GM12878 (cell line): ENCODE measurements at regions of chr17 and their contacts with region 1.

Region 1: GRCh38 chr17:50853015-50853615 is 13.0 kb downstream of the TOB1 start:
- DNase-seq: no peak
- ATAC-seq: no peak
- H3K4me3 ChIP-seq: no peak overlapping the region
- H3K27ac ChIP-seq: no peak overlapping the region
- H3K4me1 ChIP-seq: peaks cover 3% of the 10 kb centered on the region; the same call in 1 of the 2 replicates
- H3K27me3 ChIP-seq: no peaks in the 10 kb centered on the region; a peak in 1 of 4 replicates
- CTCF ChIP-seq: no peak
- EP300 ChIP-seq: no peak
- POLR2A ChIP-seq: no peak
- RAD21 ChIP-seq: no peak

Region 2: GRCh38 chr17:50798424-50799288 is 54.5 kb before region 1 on chr17:
- CTCF ChIA-PET with region 1: no interaction called
- POLR2A ChIA-PET with region 1: no interaction called
- RAD21 ChIA-PET with region 1: no interaction called
- SMC1A ChIA-PET with region 1: no interaction called
- in situ Hi-C with region 1: no loop called
- intact Hi-C with region 1: no loop called
- DNase-seq: no peak
- ATAC-seq: no peak
- H3K4me3 ChIP-seq: no peak overlapping the region
- H3K27ac ChIP-seq: no peak overlapping the region
- H3K4me1 ChIP-seq: no peaks in the 10 kb centered on the region
- H3K27me3 ChIP-seq: no peaks in the 10 kb centered on the region; a peak in 1 of 4 replicates
- CTCF ChIP-seq: no peak
- EP300 ChIP-seq: no peak
- POLR2A ChIP-seq: no peak
- RAD21 ChIP-seq: no peak

Region 3: GRCh38 chr17:50841949-50842354 is 11.2 kb before region 1 on chr17:
- CTCF ChIA-PET with region 1: interaction called, 22 read pairs
- POLR2A ChIA-PET with region 1: no interaction called
- RAD21 ChIA-PET with region 1: interaction called, 6 read pairs
- SMC1A ChIA-PET with region 1: interaction called, 10 read pairs
- in situ Hi-C with region 1: no loop called
- intact Hi-C with region 1: no loop called
- DNase-seq: no peak
- ATAC-seq: peak; percentile 90
- H3K4me3 ChIP-seq: no peak overlapping the region
- H3K27ac ChIP-seq: no peak overlapping the region
- H3K4me1 ChIP-seq: no peaks in the 10 kb centered on the region
- H3K27me3 ChIP-seq: no peaks in the 10 kb centered on the region; a peak in 2 of 4 replicates
- CTCF ChIP-seq: peak; percentile 74 to 88 (median 83); a peak in 5 of 6 replicates
- EP300 ChIP-seq: no peak
- POLR2A ChIP-seq: no peak
- RAD21 ChIP-seq: peak; percentile 85

Region 4: DNA sequence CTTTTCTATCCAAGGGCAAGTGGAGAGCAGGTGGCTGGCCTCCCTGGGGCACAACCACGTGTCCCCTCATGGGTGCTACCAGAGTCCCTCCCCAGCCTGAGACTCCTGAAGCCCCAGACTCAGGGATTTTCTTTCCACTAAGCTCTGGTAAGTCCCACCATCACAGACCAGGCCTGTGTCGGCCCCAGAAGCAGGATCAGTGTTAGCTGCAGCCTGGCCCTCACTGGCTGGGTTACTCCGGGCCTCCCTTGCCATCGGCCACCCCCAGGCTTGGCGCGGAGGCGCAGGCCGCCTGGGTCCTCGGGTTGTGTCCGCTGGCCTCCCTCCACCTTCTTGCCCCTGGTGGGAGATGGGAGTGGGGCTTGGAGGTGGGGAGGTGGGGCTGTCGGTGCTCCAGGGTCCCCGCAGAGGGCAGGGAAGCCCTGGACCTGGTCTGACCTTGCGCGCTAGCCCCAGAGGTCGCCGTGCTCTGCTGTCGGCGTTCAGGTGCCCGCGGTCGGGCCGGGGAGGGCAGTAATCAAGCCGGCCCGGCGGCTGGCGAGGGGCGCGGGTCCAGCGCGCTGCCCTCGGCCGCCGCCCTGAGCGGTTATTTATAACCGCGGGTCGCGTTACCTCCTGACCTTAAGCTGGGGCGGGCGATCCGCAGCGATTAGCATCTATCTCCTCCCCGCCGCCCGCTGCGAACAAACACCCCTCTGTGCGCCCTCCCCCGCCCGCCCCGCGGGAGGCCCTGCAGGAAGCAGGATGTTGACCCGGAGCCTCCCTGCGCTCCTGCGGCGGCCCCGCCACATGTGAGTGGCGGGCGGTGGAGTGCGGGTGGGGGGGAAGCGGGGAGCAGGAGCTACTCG is 91.2 kb after region 1 on chr17:
- CTCF ChIA-PET with region 1: interaction called, 309 read pairs
- POLR2A ChIA-PET with region 1: no interaction called
- RAD21 ChIA-PET with region 1: interaction called, 34 read pairs
- SMC1A ChIA-PET with region 1: interaction called, 67 read pairs
- in situ Hi-C with region 1: no loop called
- intact Hi-C with region 1: no loop called
- DNase-seq: no peak
- ATAC-seq: peak; percentile 69
- H3K4me3 ChIP-seq: peak overlapping the region; percentile 34; the same call in 1 of the 2 replicates
- H3K27ac ChIP-seq: no peak overlapping the region
- H3K4me1 ChIP-seq: peaks cover 5% of the 10 kb centered on the region; the same call in 1 of the 2 replicates
- H3K27me3 ChIP-seq: no peaks in the 10 kb centered on the region; a peak in 1 of 4 replicates
- CTCF ChIP-seq: no peak
- EP300 ChIP-seq: no peak
- POLR2A ChIP-seq: 0 out of 2 replicates have a peak, but pooled peaks have one; percentile 31
- RAD21 ChIP-seq: no peak

Region 5: GRCh38 chr17:50956750-50957523 is 103.8 kb after region 1 on chr17:
- CTCF ChIA-PET with region 1: interaction called, 309 read pairs
- POLR2A ChIA-PET with region 1: interaction called, 4 read pairs
- RAD21 ChIA-PET with region 1: interaction called, 40 read pairs
- SMC1A ChIA-PET with region 1: interaction called, 67 read pairs
- in situ Hi-C with region 1: loop called (anchors 5 kb)
- intact Hi-C with region 1: loop called (anchors 2 kb)
- DNase-seq: no peak
- ATAC-seq: peak; percentile 96
- H3K4me3 ChIP-seq: no peak overlapping the region
- H3K27ac ChIP-seq: no peak overlapping the region
- H3K4me1 ChIP-seq: peaks cover 11% of the 10 kb centered on the region
- H3K27me3 ChIP-seq: no peaks in the 10 kb centered on the region
- CTCF ChIP-seq: peak; percentile 73 to 80 (median 75)
- EP300 ChIP-seq: no peak
- POLR2A ChIP-seq: no peak
- RAD21 ChIP-seq: peak; percentile 71

Region 6: DNA sequence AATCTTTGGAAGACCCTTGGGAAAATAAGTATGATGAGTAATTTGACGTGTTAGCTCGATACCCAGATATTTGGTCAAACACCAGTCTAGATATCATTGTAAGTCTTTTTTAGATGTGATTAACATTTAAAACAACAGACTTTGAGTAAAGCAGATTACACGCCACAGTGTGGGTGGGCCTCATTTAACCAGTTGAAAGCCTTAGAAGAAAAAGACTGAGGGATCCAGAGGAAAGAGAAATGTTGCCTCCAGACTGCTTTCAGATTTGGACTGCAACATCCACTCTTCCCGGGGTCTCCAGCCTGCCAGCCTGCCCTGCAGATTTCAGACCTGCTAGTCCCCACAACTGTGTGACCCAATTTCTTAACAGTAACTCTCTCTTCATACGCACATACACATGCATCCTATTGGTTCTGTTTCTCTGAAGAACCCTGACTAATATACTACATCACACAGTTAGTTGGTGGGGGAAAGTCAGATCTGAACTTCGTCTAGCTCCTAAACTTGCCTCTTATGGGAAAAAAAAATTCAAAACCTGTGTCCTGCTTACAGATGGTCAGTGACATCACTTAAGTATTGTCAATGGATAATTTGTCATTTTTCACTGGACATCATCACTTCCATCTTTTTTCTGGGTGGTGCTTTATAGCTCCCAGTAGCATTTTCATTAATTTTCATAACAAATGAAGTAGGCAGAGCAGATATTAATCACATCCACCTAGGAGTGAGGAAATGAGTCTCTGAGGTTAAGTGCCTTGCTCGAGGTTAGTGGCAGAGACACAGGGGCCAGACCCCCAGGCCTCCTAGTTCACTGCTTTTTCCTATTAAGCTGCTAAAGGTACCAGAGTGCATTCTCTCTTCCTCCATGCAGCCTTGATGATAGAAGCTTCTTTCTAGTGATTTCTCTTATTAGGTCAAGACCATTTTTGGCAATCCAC is 120.7 kb after region 1 on chr17:
- CTCF ChIA-PET with region 1: interaction called, 11 read pairs
- POLR2A ChIA-PET with region 1: no interaction called
- RAD21 ChIA-PET with region 1: no interaction called
- SMC1A ChIA-PET with region 1: interaction called, 7 read pairs
- in situ Hi-C with region 1: no loop called
- intact Hi-C with region 1: no loop called
- DNase-seq: no peak
- ATAC-seq: no peak
- H3K4me3 ChIP-seq: no peak overlapping the region
- H3K27ac ChIP-seq: no peak overlapping the region
- H3K4me1 ChIP-seq: no peaks in the 10 kb centered on the region
- H3K27me3 ChIP-seq: no peaks in the 10 kb centered on the region
- CTCF ChIP-seq: no peak
- EP300 ChIP-seq: no peak
- POLR2A ChIP-seq: no peak
- RAD21 ChIP-seq: no peak

Region 7: GRCh38 chr17:50993544-50993943 is 140.4 kb after region 1 on chr17:
- CTCF ChIA-PET with region 1: no interaction called
- POLR2A ChIA-PET with region 1: no interaction called
- RAD21 ChIA-PET with region 1: no interaction called
- SMC1A ChIA-PET with region 1: no interaction called
- in situ Hi-C with region 1: no loop called
- intact Hi-C with region 1: no loop called
- DNase-seq: no peak
- ATAC-seq: no peak
- H3K4me3 ChIP-seq: no peak overlapping the region
- H3K27ac ChIP-seq: no peak overlapping the region
- H3K4me1 ChIP-seq: no peaks in the 10 kb centered on the region
- H3K27me3 ChIP-seq: no peaks in the 10 kb centered on the region
- CTCF ChIP-seq: no peak
- EP300 ChIP-seq: no peak
- POLR2A ChIP-seq: no peak
- RAD21 ChIP-seq: no peak